PC-9 (cell line): ENCODE measurements at regions of chr10 and their contacts with region 1.

Region 1: GRCh38 chr10:98361131-98362025 is 53.6 kb downstream of the PYROXD2 start:
- DNase-seq: peak; percentile 74 to 94
- H3K4me3 ChIP-seq: peak overlapping the region; percentile 34; the same call in 1 of the 2 replicates
- H3K27ac ChIP-seq: peak overlapping the region; percentile 70
- H3K4me1 ChIP-seq: peaks cover 59% of the 10 kb centered on the region
- H3K27me3 ChIP-seq: no peaks in the 10 kb centered on the region
- CTCF ChIP-seq: no peak

Region 2: DNA sequence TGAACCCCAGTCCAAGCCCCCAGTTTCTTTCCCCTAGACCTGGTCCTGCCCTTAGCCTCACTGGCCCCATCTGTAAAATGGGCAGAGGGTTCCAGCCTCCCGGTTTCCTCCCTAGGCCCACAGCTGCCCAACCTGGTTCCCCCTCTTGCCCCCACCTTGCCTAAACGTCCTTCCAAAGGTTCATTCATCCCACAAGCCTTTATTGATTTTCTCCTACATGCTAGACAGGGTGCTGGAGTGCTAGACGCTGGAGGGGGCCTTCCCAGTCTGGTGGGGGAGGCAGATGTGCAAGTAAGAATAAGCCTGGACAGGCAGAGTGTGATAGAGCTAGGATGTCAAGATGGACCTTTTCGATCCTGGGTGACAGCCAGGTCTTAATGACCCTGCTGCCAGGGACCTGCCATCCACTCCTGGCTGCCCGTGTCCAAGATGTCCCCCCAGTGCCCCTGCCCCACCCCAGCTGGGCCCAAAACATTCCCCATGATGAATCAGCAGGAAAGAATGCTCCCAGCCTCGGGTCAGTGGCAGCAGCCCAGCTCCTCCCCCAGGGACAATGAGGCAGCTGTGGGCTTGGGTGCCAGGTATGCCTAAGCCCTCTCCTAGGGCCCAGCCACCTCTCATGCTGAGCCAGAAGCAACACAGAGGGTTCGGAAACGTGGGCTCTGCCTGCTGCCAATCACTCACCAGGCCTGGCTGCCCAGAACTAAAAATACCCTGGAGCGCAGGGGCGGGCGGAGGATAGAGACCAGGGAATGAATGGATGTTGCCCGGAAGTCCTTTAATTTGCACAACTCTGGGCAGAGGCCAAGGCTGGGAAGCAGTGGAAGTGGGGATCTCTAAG is 92.1 kb before region 1 on chr10:
- CTCF ChIA-PET with region 1: no interaction called
- POLR2A ChIA-PET with region 1: no interaction called
- intact Hi-C with region 1: loop called (anchors 5 kb)
- DNase-seq: peak; percentile 88 to 91
- H3K4me3 ChIP-seq: peak overlapping the region; percentile 53; the same call in 1 of the 2 replicates
- H3K27ac ChIP-seq: peak overlapping the region; percentile 68
- H3K4me1 ChIP-seq: peaks cover 51% of the 10 kb centered on the region
- H3K27me3 ChIP-seq: no peaks in the 10 kb centered on the region
- CTCF ChIP-seq: no peak

Region 3: GRCh38 chr10:98323221-98324164 is 37.9 kb before region 1 on chr10:
- CTCF ChIA-PET with region 1: no interaction called
- POLR2A ChIA-PET with region 1: no interaction called
- intact Hi-C with region 1: loop called (anchors 2 kb)
- DNase-seq: peak; percentile 83 to 88
- H3K4me3 ChIP-seq: no peak overlapping the region
- H3K27ac ChIP-seq: peak overlapping the region; percentile 43; the same call in 1 of the 2 replicates
- H3K4me1 ChIP-seq: peaks cover 30% of the 10 kb centered on the region
- H3K27me3 ChIP-seq: no peaks in the 10 kb centered on the region
- CTCF ChIP-seq: no peak

Region 4: DNA sequence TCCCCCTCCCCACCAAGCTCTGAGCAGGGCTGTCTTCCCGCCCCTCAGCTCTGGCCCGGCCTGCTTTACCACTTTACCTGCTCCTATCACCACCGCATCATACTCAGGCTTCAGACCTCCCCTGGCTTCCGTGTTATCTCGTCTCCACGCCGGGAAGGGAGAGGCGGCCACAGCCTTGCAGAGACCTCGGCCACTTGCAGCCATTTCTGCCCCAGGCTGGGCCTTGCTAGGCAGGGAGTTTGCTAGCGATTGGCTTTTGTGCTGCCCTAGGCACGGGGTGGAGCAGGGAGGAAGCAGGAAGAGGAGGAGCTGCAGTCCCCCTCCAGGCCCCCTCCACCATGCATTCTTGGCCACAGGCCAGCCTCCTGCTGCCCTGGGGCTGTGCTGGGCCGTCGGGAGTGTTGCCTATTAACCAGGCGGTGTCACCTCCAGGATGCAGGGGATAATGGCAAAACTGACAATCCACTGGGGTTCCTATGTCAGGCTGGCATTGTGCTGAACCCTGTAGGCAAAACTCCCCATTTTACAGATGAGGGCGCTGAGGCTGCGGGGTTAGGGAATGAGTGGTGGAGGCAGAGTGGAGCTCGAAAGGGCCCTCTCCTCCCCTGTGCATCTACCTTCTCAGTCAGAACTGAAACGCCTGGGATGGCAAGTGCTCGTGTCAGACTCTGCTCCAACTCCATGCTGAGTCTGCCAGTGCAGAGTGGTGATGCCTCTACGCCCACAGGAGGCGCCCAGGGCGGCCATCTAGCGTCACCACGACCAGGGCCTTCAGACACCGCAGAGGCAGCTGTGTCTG is 53.8 kb after region 1 on chr10 and contains the start of gene PYROXD2:
- CTCF ChIA-PET with region 1: no interaction called
- POLR2A ChIA-PET with region 1: no interaction called
- intact Hi-C with region 1: loop called (anchors 1 kb)
- DNase-seq: peak; percentile 81 to 86
- H3K4me3 ChIP-seq: peak within 1 kb of the TSS; percentile 78
- H3K27ac ChIP-seq: peak within 1 kb of the TSS; percentile 37; the same call in 1 of the 2 replicates
- H3K4me1 ChIP-seq: peaks cover 9% of the 10 kb centered on the region
- H3K27me3 ChIP-seq: no peaks in the 10 kb centered on the region
- CTCF ChIP-seq: no peak
- total RNA-seq, gene PYROXD2: 28.0 and 28.2 TPM in 2 replicates

Region 5: GRCh38 chr10:99779335-99779734 is 1418.0 kb after region 1 on chr10:
- CTCF ChIA-PET with region 1: no interaction called
- POLR2A ChIA-PET with region 1: interaction called, 12 read pairs
- intact Hi-C with region 1: no loop called
- DNase-seq: peak; percentile 26 to 67
- H3K4me3 ChIP-seq: peak overlapping the region; percentile 53; the same call in 1 of the 2 replicates
- H3K27ac ChIP-seq: peak overlapping the region; percentile 100
- H3K4me1 ChIP-seq: peaks cover 70% of the 10 kb centered on the region
- H3K27me3 ChIP-seq: no peaks in the 10 kb centered on the region
- CTCF ChIP-seq: no peak